ENCODE measurements at regions of chr2 and their contacts with region 1.

Region 1: GRCh38 chr2:120012771-120013596 is at the start of gene EPB41L5:
- DNase-seq: peak; percentile 95 to 96
- ATAC-seq: peak; percentile 96 to 97 (median 97)
- H3K4me3 ChIP-seq: peak within 1 kb of the TSS; percentile 95
- H3K27ac ChIP-seq: peak within 1 kb of the TSS; percentile 94
- H3K4me1 ChIP-seq: peaks cover 4% of the 10 kb centered on the region
- H3K27me3 ChIP-seq: no peaks in the 10 kb centered on the region
- CTCF ChIP-seq: no peak
- total RNA-seq, gene EPB41L5: 12.5 to 16.0 (median 14.8) TPM

Region 2: DNA sequence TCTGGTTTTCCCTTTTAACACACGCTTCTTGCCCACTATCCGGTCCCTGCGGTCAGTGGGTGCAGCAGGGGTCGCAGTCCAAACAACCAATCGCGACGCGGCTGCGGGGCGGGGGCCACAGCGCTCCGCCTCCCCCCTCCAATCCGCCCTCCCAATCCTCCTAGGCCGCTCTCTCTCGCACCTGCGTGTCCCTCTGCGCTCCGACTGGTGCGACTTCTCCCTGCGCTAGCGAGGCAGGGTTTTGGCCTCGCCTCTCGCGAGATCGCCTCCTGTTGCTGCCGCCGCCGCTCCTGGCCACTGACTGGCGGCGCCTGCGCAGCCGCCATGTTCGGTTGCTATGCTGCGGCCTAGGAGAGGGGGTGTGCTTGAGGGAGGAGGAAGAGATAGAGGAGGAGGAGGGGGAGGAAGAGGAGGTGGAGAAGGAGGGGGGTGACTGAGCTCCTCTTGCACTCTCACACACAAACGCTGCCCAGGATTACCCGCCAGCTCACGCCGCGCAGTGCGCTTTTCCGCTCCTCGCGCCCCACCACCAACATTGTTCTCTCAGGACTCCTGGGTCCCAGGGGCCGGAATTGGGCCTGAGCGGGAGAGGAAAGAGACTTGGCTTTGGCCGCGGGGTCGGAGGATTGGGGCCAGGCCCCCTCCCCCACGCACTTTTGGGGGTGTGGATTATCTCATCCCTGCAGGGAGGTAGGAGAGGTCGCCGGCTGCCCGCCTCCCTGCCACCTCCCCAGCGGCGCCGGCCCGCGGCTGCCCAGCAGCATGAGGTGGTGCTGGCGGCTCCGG is 253.3 kb before region 1 on chr2 and contains the start of gene PTPN4:
- intact Hi-C with region 1: loop called in 1 of 2 experiments (anchors 5 kb)
- DNase-seq: peak; percentile 96 to 98
- ATAC-seq: peak; percentile 92 to 95 (median 93)
- H3K4me3 ChIP-seq: peak within 1 kb of the TSS; percentile 92
- H3K27ac ChIP-seq: peak within 1 kb of the TSS; percentile 92
- H3K4me1 ChIP-seq: peaks cover 45% of the 10 kb centered on the region
- H3K27me3 ChIP-seq: no peaks in the 10 kb centered on the region
- CTCF ChIP-seq: no peak
- total RNA-seq, gene PTPN4: 17.3 to 35.4 (median 29.2) TPM

Region 3: GRCh38 chr2:120210262-120210693 is 197.3 kb after region 1 on chr2:
- intact Hi-C with region 1: no loop called
- DNase-seq: no peak
- ATAC-seq: no peak
- H3K4me3 ChIP-seq: no peak overlapping the region
- H3K27ac ChIP-seq: no peak overlapping the region
- H3K4me1 ChIP-seq: no peaks in the 10 kb centered on the region
- H3K27me3 ChIP-seq: no peaks in the 10 kb centered on the region
- CTCF ChIP-seq: no peak

Region 4: GRCh38 chr2:120272763-120273481 is 259.9 kb after region 1 on chr2:
- intact Hi-C with region 1: no loop called
- DNase-seq: no peak
- ATAC-seq: no peak
- H3K4me3 ChIP-seq: no peak overlapping the region
- H3K27ac ChIP-seq: no peak overlapping the region
- H3K4me1 ChIP-seq: no peaks in the 10 kb centered on the region
- H3K27me3 ChIP-seq: no peaks in the 10 kb centered on the region
- CTCF ChIP-seq: no peak

Region 5: DNA sequence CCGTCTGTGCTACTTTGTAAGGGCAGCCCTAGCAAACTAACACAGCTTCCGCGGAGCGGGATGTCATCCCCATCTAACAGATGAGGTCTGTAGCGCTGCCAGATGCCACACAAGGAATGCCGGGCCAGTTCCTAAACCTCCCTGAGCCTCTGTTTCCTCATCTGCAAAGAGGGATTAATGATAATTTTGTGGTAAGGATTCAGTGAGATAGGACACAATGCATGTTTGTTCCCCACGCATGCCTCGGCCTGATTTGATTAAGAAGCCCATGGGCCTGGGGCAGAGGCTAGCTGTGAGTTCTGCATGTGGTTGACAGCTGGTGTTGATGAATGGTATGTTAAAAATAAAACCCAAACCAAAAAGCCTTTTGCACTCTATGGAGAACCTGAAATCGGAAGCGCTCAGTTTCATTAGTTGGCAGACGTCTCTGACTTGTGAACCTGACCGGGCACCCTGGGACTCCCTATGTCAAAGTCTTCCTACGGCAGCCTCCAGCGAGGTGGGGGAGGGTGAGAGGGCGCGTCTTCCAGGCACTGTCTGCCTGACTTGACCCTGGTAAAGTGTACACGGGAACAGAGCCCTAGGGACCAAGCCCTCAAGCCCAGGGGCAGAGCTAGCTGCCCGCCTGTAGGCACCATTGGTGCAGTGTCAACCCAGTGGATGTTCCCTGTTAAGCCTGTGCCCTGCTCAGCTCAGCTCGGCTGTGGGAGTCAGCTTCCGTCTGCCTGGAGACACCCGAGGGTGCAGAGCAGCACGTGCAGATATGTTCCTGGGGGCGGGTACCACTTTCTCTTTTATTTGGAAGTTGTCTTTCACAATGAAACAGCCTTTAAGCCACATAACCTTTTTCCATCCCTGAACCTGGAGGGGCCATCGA is 318.2 kb after region 1 on chr2:
- intact Hi-C with region 1: no loop called
- DNase-seq: peak in 1 of 2 donors; percentile 61
- ATAC-seq: peak; percentile 42 to 85 (median 76)
- H3K4me3 ChIP-seq: no peak overlapping the region
- H3K27ac ChIP-seq: no peak overlapping the region
- H3K4me1 ChIP-seq: no peaks in the 10 kb centered on the region
- H3K27me3 ChIP-seq: peaks cover 0 to 2% (median 0%) of the 10 kb centered on the region in 3 donors
- CTCF ChIP-seq: no peak